ENCODE measurements at regions of chr1 and their contacts with region 1.

Region 1: GRCh38 chr1:44721485-44722361 is 9.2 kb downstream of the RNU5D-1 start:
- DNase-seq: peak; percentile 17 to 85 (median 74)
- ATAC-seq: peak; percentile 84 to 90
- H3K4me3 Mint-ChIP-seq: peak overlapping the region; percentile 42 to 85 (median 79)
- H3K27ac Mint-ChIP-seq: peak overlapping the region; percentile 93 to 99 (median 96)
- H3K4me1 Mint-ChIP-seq: peaks cover 50 to 80% (median 78%) of the 10 kb centered on the region in 4 donors
- H3K27me3 Mint-ChIP-seq: no peaks in the 10 kb centered on the region

Region 2: GRCh38 chr1:44609412-44609767 is 112.3 kb before region 1 on chr1:
- POLR2A ChIA-PET with region 1: no interaction called
- DNase-seq: peak in 7 of 10 donors; percentile 12 to 70 (median 29)
- ATAC-seq: no peak
- H3K4me3 Mint-ChIP-seq: no peak overlapping the region
- H3K27ac Mint-ChIP-seq: no peak overlapping the region
- H3K4me1 Mint-ChIP-seq: no peaks in the 10 kb centered on the region
- H3K27me3 Mint-ChIP-seq: peaks cover 0 to 2% (median 0%) of the 10 kb centered on the region in 5 donors

Region 3: DNA sequence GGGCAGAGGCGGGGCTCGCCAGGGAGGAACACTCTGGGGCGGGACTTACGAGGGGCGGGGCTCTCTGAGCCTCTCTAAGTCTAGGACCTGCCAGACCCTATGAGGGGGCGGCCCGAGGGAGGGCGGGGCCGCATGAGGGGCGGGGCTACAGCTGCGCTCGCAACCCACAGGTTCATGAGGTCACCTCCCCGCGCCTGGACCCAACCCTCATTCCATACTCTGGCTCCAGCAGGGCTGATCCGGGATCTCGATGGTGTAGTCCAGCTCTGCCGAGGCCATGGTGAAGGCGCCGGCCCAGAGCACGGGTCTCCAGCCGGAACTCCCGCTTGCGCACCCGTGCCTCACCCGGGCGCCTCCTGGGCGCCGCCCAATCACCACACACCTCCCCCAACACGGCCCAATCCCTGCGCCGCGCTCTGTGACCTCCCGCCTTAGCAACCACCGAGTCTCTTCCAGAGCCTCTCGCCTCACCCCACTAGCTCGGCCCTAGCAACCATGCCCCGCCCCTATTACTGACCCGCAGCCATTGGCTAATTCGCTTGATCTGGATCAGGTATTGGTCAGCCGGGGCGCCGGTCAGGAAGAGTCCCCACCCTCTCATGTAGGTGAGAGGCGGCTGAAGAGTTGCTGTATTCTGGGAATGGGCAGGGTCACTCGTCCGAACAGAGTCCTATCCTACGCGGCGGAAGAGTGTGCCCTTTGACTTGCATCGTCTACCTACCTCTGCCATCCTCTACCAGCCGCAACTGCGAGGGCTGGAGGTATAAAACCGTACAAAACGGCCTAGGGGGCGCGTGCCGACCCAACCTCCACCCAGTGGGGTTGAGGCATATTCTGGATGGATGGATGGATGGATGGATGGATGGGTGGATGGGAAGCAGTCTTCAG is 47.4 kb before region 1 on chr1 and contains the starts of genes ARMH1 and TMEM53:
- POLR2A ChIA-PET with region 1: interaction called, 12 read pairs
- DNase-seq: peak; percentile 91 to 98 (median 94)
- ATAC-seq: peak; percentile 94
- H3K4me3 Mint-ChIP-seq: peak within 1 kb of the TSS; percentile 87 to 95 (median 91)
- H3K27ac Mint-ChIP-seq: peak within 1 kb of the TSS; percentile 69 to 96 (median 92)
- H3K4me1 Mint-ChIP-seq: peaks cover 4 to 33% (median 17%) of the 10 kb centered on the region in 4 donors
- H3K27me3 Mint-ChIP-seq: no peaks in the 10 kb centered on the region
- polyA plus RNA-seq, gene ARMH1: 46.2 to 75.6 (median 53.2) TPM
- polyA plus RNA-seq, gene TMEM53: 4.6 to 5.9 (median 5.5) TPM

Region 4: GRCh38 chr1:44786138-44786840 is 64.6 kb after region 1 on chr1:
- POLR2A ChIA-PET with region 1: interaction called, 16 read pairs
- DNase-seq: peak; percentile 64 to 91 (median 79)
- ATAC-seq: peak; percentile 75 to 77
- H3K4me3 Mint-ChIP-seq: peak overlapping the region; percentile 69 to 84 (median 80)
- H3K27ac Mint-ChIP-seq: peak overlapping the region; percentile 35 to 95 (median 88)
- H3K4me1 Mint-ChIP-seq: peaks cover 16 to 34% (median 30%) of the 10 kb centered on the region in 4 donors
- H3K27me3 Mint-ChIP-seq: no peaks in the 10 kb centered on the region

Region 5: DNA sequence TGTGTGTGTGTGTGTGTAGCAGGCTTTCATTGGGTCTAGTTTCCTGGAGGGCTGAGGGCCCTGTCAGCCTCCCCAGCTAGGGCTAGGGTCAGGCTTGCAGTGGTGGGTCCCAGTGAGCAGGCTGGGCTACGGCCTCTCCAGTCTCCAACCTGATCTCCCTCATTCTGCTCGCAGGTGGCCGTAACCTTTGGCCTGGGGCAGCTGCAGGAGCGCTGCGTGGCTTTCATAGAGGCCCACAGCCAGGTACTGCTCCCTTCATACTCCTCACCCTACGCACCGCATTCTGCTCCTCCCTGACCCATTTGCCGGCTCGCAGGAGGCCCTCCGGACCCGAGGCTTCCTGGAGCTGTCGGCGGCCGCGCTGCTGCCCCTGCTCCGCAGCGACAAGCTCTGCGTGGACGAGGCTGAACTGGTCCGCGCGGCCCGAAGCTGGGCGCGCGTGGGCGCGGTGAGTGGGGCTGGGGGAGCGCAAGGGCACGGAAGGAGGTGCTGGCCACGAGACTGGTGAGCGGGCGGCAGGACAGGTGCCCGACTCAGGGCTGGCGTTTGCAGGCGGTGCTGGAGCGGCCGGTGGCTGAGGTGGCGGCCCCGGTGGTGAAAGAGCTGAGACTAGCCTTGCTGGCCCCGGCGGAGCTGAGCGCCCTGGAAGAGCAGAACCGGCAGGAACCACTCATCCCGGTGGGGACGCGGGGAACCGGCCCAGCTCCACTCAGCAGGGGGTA is 91.3 kb after region 1 on chr1:
- POLR2A ChIA-PET with region 1: interaction called, 30 read pairs
- DNase-seq: peak in 1 of 10 donors; percentile 45
- ATAC-seq: no peak
- H3K4me3 Mint-ChIP-seq: peak overlapping the region in 5 of 10 donors; percentile 6 to 91 (median 30)
- H3K27ac Mint-ChIP-seq: peak overlapping the region in 9 of 10 donors; percentile 37 to 100 (median 99)
- H3K4me1 Mint-ChIP-seq: peaks cover 34 to 75% (median 72%) of the 10 kb centered on the region in 4 donors
- H3K27me3 Mint-ChIP-seq: no peaks in the 10 kb centered on the region

Region 6: GRCh38 chr1:45303582-45304310 is 582.0 kb after region 1 on chr1:
- POLR2A ChIA-PET with region 1: interaction called, 16 read pairs
- DNase-seq: peak; percentile 86 to 98 (median 96)
- ATAC-seq: peak; percentile 83 to 86
- H3K4me3 Mint-ChIP-seq: peak overlapping the region; percentile 88 to 96 (median 92)
- H3K27ac Mint-ChIP-seq: peak overlapping the region; percentile 91 to 98 (median 96)
- H3K4me1 Mint-ChIP-seq: peaks cover 5 to 37% (median 20%) of the 10 kb centered on the region in 4 donors
- H3K27me3 Mint-ChIP-seq: no peaks in the 10 kb centered on the region

Measured in naive thymus-derived CD8-positive, alpha-beta T cell (primary cell).